Natural killer cell (primary cell): ENCODE measurements at regions of chr3 and their contacts with region 1.

Region 1: DNA sequence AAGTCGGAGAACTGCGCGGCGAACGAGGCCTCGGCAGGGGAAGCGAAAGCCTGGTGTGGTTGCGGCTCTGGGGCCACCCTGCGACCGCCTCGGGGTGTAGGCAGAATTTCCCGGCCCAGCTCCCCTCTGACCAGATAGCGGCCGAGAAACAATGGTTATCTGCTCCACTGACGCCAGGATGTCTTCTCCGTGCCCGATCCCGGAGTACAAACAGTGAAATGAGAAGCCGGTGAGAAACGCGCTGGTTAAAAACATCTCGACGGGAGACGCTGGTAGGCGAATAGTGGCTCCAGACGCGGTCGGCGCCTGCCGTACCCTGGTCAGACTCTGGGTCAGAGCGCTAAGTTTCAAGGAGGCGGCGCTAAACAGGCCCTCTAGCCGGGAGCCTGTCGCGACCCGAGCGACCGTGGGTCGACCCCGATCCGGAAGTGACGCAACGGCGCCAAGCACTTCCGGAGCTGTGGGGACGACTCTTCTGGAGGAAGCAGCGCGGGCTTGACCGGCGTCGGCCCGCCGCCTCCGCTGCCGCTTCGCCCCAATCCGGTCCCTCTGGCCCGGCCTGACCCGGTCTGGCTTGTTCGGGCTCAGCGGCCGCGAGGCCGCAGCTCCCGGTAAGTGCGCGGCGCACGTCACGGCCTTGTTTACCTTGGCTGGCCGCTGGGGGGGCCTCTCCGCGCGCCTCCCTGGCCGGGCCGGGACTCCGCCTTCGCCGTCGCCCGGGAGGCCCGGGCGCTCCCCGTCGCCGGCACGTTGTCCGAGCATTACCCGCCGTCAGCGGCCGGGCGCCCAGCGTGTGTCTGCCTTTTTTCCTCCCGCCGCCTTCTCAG is at the start of gene ARIH2:
- DNase-seq: peak; percentile 90 to 96
- ATAC-seq: peak; percentile 71 to 90 (median 78)
- H3K4me3 ChIP-seq: peak within 1 kb of the TSS; percentile 69
- H3K4me3 Mint-ChIP-seq: peak within 1 kb of the TSS; percentile 93
- H3K27ac ChIP-seq: peak within 1 kb of the TSS; percentile 93
- H3K27ac Mint-ChIP-seq: peak within 1 kb of the TSS; percentile 94 to 99
- H3K4me1 ChIP-seq: peaks cover 32% of the 10 kb centered on the region
- H3K4me1 Mint-ChIP-seq: peaks cover 15 to 20% of the 10 kb centered on the region in 2 donors
- H3K27me3 ChIP-seq: no peaks in the 10 kb centered on the region
- H3K27me3 Mint-ChIP-seq: no peaks in the 10 kb centered on the region
- CTCF ChIP-seq: peak; percentile 21
- total RNA-seq, gene ARIH2: 239 to 291 (median 243) TPM

Region 2: GRCh38 chr3:48811524-48811923 is 107.1 kb before region 1 on chr3:
- intact Hi-C with region 1: loop called (anchors 2 kb)
- DNase-seq: no peak
- ATAC-seq: no peak
- H3K4me3 ChIP-seq: no peak overlapping the region
- H3K4me3 Mint-ChIP-seq: peak overlapping the region; percentile 65
- H3K27ac ChIP-seq: peak overlapping the region; percentile 83
- H3K27ac Mint-ChIP-seq: peak overlapping the region; percentile 90 to 95
- H3K4me1 ChIP-seq: peaks cover 20% of the 10 kb centered on the region
- H3K4me1 Mint-ChIP-seq: peaks cover 28 to 31% of the 10 kb centered on the region in 2 donors
- H3K27me3 ChIP-seq: no peaks in the 10 kb centered on the region
- H3K27me3 Mint-ChIP-seq: no peaks in the 10 kb centered on the region
- CTCF ChIP-seq: no peak

Region 3: GRCh38 chr3:48847504-48848423 is 70.8 kb before region 1 on chr3 and contains the start of gene PRKAR2A:
- intact Hi-C with region 1: loop called (anchors 5 kb)
- DNase-seq: peak; percentile 88 to 92
- ATAC-seq: peak; percentile 89 to 95 (median 89)
- H3K4me3 ChIP-seq: peak within 1 kb of the TSS; percentile 86
- H3K4me3 Mint-ChIP-seq: peak within 1 kb of the TSS; percentile 91
- H3K27ac ChIP-seq: peak within 1 kb of the TSS; percentile 79
- H3K27ac Mint-ChIP-seq: peak within 1 kb of the TSS; percentile 98
- H3K4me1 ChIP-seq: peaks cover 27% of the 10 kb centered on the region
- H3K4me1 Mint-ChIP-seq: peaks cover 23 to 29% of the 10 kb centered on the region in 2 donors
- H3K27me3 ChIP-seq: no peaks in the 10 kb centered on the region
- H3K27me3 Mint-ChIP-seq: no peaks in the 10 kb centered on the region
- CTCF ChIP-seq: no peak
- total RNA-seq, gene PRKAR2A: 40.5 to 43.5 (median 42.7) TPM

Region 4: GRCh38 chr3:48952510-48953118 is 34.0 kb after region 1 on chr3:
- intact Hi-C with region 1: no loop called
- DNase-seq: peak; percentile 30 to 76
- ATAC-seq: peak in 2 of 3 donors; percentile 77 to 79
- H3K4me3 ChIP-seq: no peak overlapping the region
- H3K4me3 Mint-ChIP-seq: no peak overlapping the region
- H3K27ac ChIP-seq: no peak overlapping the region
- H3K27ac Mint-ChIP-seq: peak overlapping the region; percentile 4 to 53
- H3K4me1 ChIP-seq: no peaks in the 10 kb centered on the region
- H3K4me1 Mint-ChIP-seq: peaks cover 12 to 21% of the 10 kb centered on the region in 2 donors
- H3K27me3 ChIP-seq: no peaks in the 10 kb centered on the region
- H3K27me3 Mint-ChIP-seq: no peaks in the 10 kb centered on the region
- CTCF ChIP-seq: peak; percentile 50

Region 5: DNA sequence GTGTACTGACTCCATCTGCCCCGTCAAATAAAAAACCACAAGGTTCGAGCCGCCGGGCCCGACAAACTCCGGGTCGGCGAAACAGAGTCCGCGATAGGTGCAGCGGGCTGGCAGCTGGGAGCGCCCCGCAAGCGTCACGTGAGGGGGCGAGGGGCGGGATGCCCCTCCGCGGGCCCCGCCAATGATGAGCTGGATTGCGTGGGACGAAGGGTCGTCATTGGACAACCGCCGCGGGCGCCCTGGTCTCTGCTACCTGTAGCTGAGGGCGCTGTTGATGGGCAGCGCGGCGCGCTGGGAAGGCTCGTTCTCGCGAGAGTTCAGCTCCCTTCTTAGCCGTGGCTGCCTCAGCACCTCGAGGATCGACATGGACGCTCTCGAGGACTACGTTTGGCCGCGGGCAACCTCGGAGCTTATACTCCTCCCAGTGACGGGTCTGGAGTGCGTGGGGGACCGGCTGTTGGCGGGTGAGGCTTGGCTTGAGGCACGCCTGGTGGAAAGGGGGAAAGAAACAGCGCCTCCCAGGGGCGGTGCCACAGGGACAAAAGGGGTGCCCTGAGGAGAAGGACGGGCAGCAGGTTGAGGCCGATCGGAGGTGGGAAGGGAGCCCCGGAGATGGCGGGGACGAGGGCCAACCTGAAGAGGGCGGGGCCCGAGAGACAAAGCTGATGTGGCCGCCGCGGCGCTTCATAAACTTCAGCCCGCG is 88.6 kb after region 1 on chr3 and contains the start of gene WDR6:
- intact Hi-C with region 1: loop called (anchors 5 kb)
- DNase-seq: peak; percentile 94 to 99
- ATAC-seq: peak; percentile 91 to 98 (median 94)
- H3K4me3 ChIP-seq: peak within 1 kb of the TSS; percentile 96
- H3K4me3 Mint-ChIP-seq: peak within 1 kb of the TSS; percentile 100
- H3K27ac ChIP-seq: peak within 1 kb of the TSS; percentile 95
- H3K27ac Mint-ChIP-seq: peak within 1 kb of the TSS; percentile 98 to 99
- H3K4me1 ChIP-seq: peaks cover 20% of the 10 kb centered on the region
- H3K4me1 Mint-ChIP-seq: peaks cover 21 to 24% of the 10 kb centered on the region in 2 donors
- H3K27me3 ChIP-seq: no peaks in the 10 kb centered on the region
- H3K27me3 Mint-ChIP-seq: no peaks in the 10 kb centered on the region
- CTCF ChIP-seq: peak; percentile 44
- total RNA-seq, gene WDR6: 113 to 167 (median 129) TPM